PC-9 (cell line): ENCODE measurements at regions of chr10 and their contacts with region 1.

Region 1: GRCh38 chr10:29517352-29517923 is 117.3 kb downstream of the SVIL start:
- DNase-seq: peak in 1 of 2 experiments; percentile 9
- H3K4me3 ChIP-seq: no peak overlapping the region
- H3K27ac ChIP-seq: no peak overlapping the region
- H3K4me1 ChIP-seq: no peaks in the 10 kb centered on the region
- H3K27me3 ChIP-seq: no peaks in the 10 kb centered on the region
- CTCF ChIP-seq: peak; percentile 64

Region 2: DNA sequence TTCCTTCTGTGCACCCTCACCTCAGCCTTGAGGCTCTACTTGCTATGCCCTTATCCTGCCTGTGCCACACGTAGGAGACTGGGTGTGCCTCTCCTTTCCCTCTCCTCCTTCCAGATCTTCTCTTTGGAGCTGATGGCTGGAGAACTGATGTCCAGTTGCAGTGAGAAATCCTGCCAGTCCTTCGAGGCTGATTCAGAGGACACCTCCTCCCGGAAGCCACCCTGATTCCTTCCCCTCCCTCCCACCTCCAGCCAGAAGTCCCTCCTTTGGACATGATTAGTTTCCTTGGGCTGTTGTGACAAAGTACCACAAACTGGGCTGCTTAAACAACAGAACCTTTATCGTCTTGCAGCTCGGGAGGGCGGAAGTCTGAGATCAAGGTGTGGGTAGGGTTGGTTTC is 67.0 kb before region 1 on chr10:
- CTCF ChIA-PET with region 1: no interaction called
- POLR2A ChIA-PET with region 1: interaction called, 12 read pairs
- intact Hi-C with region 1: no loop called
- DNase-seq: no peak
- H3K4me3 ChIP-seq: no peak overlapping the region
- H3K27ac ChIP-seq: no peak overlapping the region
- H3K4me1 ChIP-seq: no peaks in the 10 kb centered on the region
- H3K27me3 ChIP-seq: no peaks in the 10 kb centered on the region
- CTCF ChIP-seq: no peak

Region 3: DNA sequence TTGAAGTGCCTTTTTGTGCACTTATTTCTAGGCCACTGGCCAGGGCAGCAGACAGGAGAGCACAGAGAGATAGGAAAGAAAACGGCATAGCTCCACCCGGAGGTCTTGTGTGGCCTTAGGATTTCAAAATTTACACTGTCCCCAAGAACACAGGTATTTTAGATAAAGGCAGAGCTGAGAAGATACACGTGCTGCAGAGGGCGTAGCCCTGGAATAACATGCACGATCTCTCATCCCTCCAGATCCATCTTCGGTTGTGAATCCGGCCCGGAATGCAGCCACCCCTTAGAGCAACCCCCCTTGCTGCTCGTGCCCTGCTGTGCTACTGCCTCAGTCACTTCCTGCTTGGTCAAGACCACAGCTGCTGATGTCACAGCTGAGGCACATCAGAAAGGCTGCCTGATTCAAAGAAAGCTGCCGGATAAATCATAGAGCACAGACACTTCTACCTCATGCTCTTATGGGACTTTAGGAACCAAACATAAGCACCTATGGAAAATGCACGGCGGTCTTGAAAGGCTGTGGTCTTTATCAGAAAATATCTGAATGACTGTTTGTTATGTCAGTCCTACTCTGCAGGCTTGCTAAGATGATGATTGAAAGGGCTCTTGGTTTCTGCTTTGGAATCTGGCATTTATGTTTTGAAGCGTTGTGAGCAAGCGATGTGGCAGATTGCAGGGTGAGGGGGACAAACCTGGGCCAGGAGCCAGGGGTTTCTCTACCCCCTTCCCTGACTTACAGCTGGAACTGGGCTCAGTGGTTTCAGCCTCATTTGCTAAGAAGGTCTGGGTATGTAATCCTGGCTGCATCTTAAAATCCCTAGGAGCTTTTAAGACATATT is 34.6 kb before region 1 on chr10:
- CTCF ChIA-PET with region 1: interaction called, 17 read pairs
- POLR2A ChIA-PET with region 1: no interaction called
- intact Hi-C with region 1: no loop called
- DNase-seq: no peak
- H3K4me3 ChIP-seq: no peak overlapping the region
- H3K27ac ChIP-seq: no peak overlapping the region
- H3K4me1 ChIP-seq: no peaks in the 10 kb centered on the region
- H3K27me3 ChIP-seq: no peaks in the 10 kb centered on the region
- CTCF ChIP-seq: no peak

Region 4: GRCh38 chr10:29598851-29599311 is 81.4 kb after region 1 on chr10:
- CTCF ChIA-PET with region 1: interaction called, 11 read pairs
- POLR2A ChIA-PET with region 1: no interaction called
- intact Hi-C with region 1: no loop called
- DNase-seq: no peak
- H3K4me3 ChIP-seq: no peak overlapping the region
- H3K27ac ChIP-seq: no peak overlapping the region
- H3K4me1 ChIP-seq: no peaks in the 10 kb centered on the region
- H3K27me3 ChIP-seq: no peaks in the 10 kb centered on the region
- CTCF ChIP-seq: no peak

Region 5: GRCh38 chr10:30284865-30285594 is 767.6 kb after region 1 on chr10:
- CTCF ChIA-PET with region 1: interaction called, 11 read pairs
- POLR2A ChIA-PET with region 1: no interaction called
- intact Hi-C with region 1: no loop called
- DNase-seq: peak in 1 of 2 experiments; percentile 8
- H3K4me3 ChIP-seq: no peak overlapping the region
- H3K27ac ChIP-seq: no peak overlapping the region
- H3K4me1 ChIP-seq: no peaks in the 10 kb centered on the region
- H3K27me3 ChIP-seq: no peaks in the 10 kb centered on the region
- CTCF ChIP-seq: no peak

Region 6: GRCh38 chr10:30709229-30709628 is 1191.8 kb after region 1 on chr10:
- CTCF ChIA-PET with region 1: no interaction called
- POLR2A ChIA-PET with region 1: interaction called, 22 read pairs
- intact Hi-C with region 1: no loop called
- DNase-seq: no peak
- H3K4me3 ChIP-seq: no peak overlapping the region
- H3K27ac ChIP-seq: no peak overlapping the region
- H3K4me1 ChIP-seq: no peaks in the 10 kb centered on the region
- H3K27me3 ChIP-seq: no peaks in the 10 kb centered on the region
- CTCF ChIP-seq: no peak